Pancreas (tissue), 10 donors: ENCODE measurements at regions of chr5 and their contacts with region 1.

Region 1: GRCh38 chr5:94524841-94525697 is 93.3 kb downstream of the KIAA0825 start:
- DNase-seq: no peak
- ATAC-seq: peak; percentile 63 to 86 (median 82)
- H3K4me3 ChIP-seq: no peak overlapping the region
- H3K27ac ChIP-seq: no peak overlapping the region
- H3K4me1 ChIP-seq: no peaks in the 10 kb centered on the region
- H3K27me3 ChIP-seq: no peaks in the 10 kb centered on the region
- CTCF ChIP-seq: peak in 3 of 4 donors; percentile 9 to 50 (median 39)

Region 2: DNA sequence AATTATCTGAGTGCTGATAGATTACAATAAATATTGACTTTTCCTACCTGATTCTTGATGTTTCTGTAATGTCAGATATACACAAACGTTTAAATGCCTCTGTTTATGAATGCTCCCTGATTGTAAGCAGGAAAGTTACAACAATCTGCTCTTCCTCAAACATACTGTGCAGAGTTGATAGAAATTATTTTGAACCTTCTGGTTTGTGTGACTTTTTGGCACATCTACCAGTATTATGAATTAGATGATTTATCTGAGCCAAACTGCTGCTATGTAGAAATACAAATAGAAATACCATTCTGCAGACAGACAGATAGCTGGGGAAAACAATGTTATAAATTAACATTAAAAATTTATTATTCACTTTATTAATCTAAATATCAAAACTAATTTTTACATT is 206.4 kb after region 1 on chr5:
- intact Hi-C with region 1: loop called in 1 of 3 experiments (anchors 10 kb)
- DNase-seq: no peak
- ATAC-seq: peak in 1 of 4 donors; percentile 22
- H3K4me3 ChIP-seq: no peak overlapping the region
- H3K27ac ChIP-seq: no peak overlapping the region
- H3K4me1 ChIP-seq: peaks cover 0 to 10% (median 5%) of the 10 kb centered on the region in 3 donors
- H3K27me3 ChIP-seq: no peaks in the 10 kb centered on the region
- CTCF ChIP-seq: no peak